HCT116 (cell line): ENCODE measurements at regions of chr6 and their contacts with region 1.

Region 1: DNA sequence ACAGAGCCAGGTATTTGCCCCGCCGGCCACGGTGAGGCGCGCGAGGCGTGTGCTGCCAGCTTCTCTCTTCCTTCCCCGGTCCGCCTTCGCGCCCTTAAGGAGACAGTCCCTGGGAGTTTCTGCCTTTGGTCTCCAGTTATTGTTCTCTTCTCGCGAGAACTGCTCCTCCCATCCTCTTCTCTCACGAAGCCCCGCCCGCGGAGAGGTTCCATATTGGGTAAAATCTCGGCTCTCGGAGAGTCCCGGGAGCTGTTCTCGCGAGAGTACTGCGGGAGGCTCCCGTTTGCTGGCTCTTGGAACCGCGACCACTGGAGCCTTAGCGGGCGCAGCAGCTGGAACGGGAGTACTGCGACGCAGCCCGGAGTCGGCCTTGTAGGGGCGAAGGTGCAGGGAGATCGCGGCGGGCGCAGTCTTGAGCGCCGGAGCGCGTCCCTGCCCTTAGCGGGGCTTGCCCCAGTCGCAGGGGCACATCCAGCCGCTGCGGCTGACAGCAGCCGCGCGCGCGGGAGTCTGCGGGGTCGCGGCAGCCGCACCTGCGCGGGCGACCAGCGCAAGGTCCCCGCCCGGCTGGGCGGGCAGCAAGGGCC is at the start of gene MAPK14:
- DNase-seq: peak; percentile 100
- ATAC-seq: peak; percentile 93
- H3K4me3 ChIP-seq: peak within 1 kb of the TSS; percentile 95 to 98
- H3K27ac ChIP-seq: peak within 1 kb of the TSS; percentile 86
- H3K4me1 ChIP-seq: peaks cover 4 to 21% of the 10 kb centered on the region in 2 experiments; a peak in 3 of 4 replicates
- H3K27me3 ChIP-seq: no peaks in the 10 kb centered on the region
- CTCF ChIP-seq: peak; percentile 78 to 88 (median 79)
- POLR2A ChIP-seq: peak; percentile 89
- RAD21 ChIP-seq: peak; percentile 91
- total RNA-seq, gene MAPK14: 34.2 TPM

Region 2: DNA sequence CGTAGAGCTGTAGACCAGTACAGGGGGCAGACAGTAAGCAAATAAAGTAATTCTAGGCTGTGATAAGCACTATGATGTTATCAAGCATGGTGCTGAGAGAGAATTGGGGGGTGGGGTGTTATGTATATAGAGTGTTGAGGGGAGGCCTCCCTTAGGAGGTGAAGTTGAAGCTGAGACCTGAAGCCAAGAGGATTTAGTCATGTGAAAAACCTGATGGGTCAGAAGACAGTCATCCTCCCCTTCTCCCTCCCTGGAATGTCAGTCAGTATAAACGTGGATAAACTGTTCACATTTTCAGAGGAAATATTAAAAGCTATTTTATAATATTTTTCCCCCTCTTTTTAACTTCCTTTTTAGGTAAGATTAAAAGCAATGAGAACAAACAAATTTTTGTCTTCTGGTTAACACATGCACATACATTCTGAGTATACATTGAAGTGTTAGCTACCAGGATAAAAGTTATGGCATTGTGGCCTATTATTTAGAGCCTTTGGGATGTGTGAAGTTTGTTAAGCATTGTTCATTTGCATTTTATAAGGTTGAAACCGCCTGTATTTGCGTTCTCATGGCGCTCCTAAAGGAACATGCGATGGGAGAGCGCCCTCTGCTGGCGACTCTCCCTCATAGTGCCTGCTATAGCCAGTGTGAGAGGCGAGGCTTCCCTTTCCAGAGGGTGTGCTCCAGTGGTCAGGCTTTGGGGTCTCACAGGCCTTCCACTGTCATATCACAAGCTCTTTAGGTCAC is 67.3 kb after region 1 on chr6:
- CTCF ChIA-PET with region 1: interaction called, 9 read pairs
- POLR2A ChIA-PET with region 1: interaction called, 3 read pairs
- RAD21 ChIA-PET with region 1: interaction called in 1 of 2 experiments, 6 read pairs
- intact Hi-C with region 1: loop called (anchors 1 kb)
- DNase-seq: peak; percentile 47
- ATAC-seq: peak; percentile 99
- H3K4me3 ChIP-seq: no peak overlapping the region
- H3K27ac ChIP-seq: no peak overlapping the region
- H3K4me1 ChIP-seq: no peaks in the 10 kb centered on the region
- H3K27me3 ChIP-seq: no peaks in the 10 kb centered on the region
- CTCF ChIP-seq: peak; percentile 77 to 95 (median 95)
- POLR2A ChIP-seq: no peak
- RAD21 ChIP-seq: peak; percentile 89

Region 3: GRCh38 chr6:36196880-36197548 is 169.4 kb after region 1 on chr6:
- CTCF ChIA-PET with region 1: no interaction called
- POLR2A ChIA-PET with region 1: no interaction called
- RAD21 ChIA-PET with region 1: no interaction called
- intact Hi-C with region 1: loop called (anchors 2 kb)
- DNase-seq: peak; percentile 91
- ATAC-seq: peak; percentile 94
- H3K4me3 ChIP-seq: peak overlapping the region; percentile 53 to 70
- H3K27ac ChIP-seq: peak overlapping the region; percentile 75
- H3K4me1 ChIP-seq: peaks cover 5 to 17% of the 10 kb centered on the region in 2 experiments; a peak in 3 of 4 replicates
- H3K27me3 ChIP-seq: no peaks in the 10 kb centered on the region
- CTCF ChIP-seq: no peak
- POLR2A ChIP-seq: no peak
- RAD21 ChIP-seq: no peak

Region 4: DNA sequence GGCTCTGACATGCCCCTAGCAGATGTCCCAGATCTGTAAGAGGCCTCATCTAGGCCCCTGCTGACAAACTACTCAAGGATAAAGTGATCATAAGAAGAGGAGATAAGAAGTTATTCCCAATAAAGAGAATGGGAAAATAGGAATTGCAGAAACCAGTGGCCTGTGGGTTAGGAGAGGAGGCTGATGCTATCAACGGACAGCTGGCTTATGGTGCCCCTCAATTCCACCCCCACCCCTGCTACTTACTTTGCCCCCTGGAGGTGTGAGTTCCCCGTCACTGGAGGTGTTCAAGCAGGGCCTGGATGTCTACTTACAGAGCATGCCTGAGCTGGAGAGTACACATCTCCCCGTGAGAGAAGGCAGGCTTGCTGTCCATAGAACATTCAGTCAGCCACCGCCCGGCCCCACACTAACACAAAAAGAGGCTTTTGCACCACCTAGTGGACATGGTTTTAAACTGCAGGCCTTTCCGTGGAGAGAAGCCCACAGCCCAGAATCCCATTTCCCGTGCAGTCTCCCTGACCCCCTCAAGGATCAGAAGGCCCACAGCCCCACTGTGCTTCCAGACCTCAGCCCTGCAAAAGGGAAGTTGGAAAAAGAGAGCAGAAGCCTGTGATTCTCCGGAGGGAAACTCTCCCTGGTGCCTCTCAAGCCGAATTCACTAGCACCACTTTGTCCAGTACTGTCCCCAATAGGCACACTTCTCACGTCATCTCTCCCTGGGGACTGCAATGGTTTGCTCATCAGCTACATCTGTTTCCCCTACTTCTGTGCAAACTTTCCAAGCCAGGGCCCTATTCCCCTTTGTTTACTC is 332.9 kb after region 1 on chr6:
- CTCF ChIA-PET with region 1: no interaction called
- POLR2A ChIA-PET with region 1: no interaction called
- RAD21 ChIA-PET with region 1: no interaction called
- intact Hi-C with region 1: loop called (anchors 1 kb)
- DNase-seq: peak; percentile 60
- ATAC-seq: peak; percentile 97
- H3K4me3 ChIP-seq: no peak overlapping the region
- H3K27ac ChIP-seq: no peak overlapping the region
- H3K4me1 ChIP-seq: peaks cover 0 to 4% of the 10 kb centered on the region in 2 experiments; a peak in 1 of 4 replicates
- H3K27me3 ChIP-seq: no peaks in the 10 kb centered on the region
- CTCF ChIP-seq: peak; percentile 77 to 86 (median 85)
- POLR2A ChIP-seq: no peak
- RAD21 ChIP-seq: peak; percentile 94